ENCODE measurements at regions of chr17 and their contacts with region 1.

Region 1: GRCh38 chr17:9768381-9768934 is 22.9 kb downstream of the DHRS7C start:
- DNase-seq: peak; percentile 57
- H3K4me3 Mint-ChIP-seq: no peak overlapping the region
- H3K27ac Mint-ChIP-seq: no peak overlapping the region
- H3K4me1 Mint-ChIP-seq: peaks cover 4% of the 10 kb centered on the region
- H3K27me3 Mint-ChIP-seq: peaks cover 10% of the 10 kb centered on the region
- CTCF ChIP-seq: peak; percentile 60

Region 2: GRCh38 chr17:9729034-9729650 is 39.3 kb before region 1 on chr17:
- CTCF ChIA-PET with region 1: interaction called, 45 read pairs
- POLR2A ChIA-PET with region 1: interaction called, 3 read pairs
- intact Hi-C with region 1: loop called (anchors 1 kb)
- DNase-seq: peak; percentile 67
- H3K4me3 Mint-ChIP-seq: no peak overlapping the region
- H3K27ac Mint-ChIP-seq: no peak overlapping the region
- H3K4me1 Mint-ChIP-seq: peaks cover 7% of the 10 kb centered on the region
- H3K27me3 Mint-ChIP-seq: no peaks in the 10 kb centered on the region
- CTCF ChIP-seq: peak; percentile 89

Measured in MCF 10A (cell line).